Common myeloid progenitor, CD34-positive (primary cell): ENCODE measurements at regions of chr11 and their contacts with region 1.

Region 1: DNA sequence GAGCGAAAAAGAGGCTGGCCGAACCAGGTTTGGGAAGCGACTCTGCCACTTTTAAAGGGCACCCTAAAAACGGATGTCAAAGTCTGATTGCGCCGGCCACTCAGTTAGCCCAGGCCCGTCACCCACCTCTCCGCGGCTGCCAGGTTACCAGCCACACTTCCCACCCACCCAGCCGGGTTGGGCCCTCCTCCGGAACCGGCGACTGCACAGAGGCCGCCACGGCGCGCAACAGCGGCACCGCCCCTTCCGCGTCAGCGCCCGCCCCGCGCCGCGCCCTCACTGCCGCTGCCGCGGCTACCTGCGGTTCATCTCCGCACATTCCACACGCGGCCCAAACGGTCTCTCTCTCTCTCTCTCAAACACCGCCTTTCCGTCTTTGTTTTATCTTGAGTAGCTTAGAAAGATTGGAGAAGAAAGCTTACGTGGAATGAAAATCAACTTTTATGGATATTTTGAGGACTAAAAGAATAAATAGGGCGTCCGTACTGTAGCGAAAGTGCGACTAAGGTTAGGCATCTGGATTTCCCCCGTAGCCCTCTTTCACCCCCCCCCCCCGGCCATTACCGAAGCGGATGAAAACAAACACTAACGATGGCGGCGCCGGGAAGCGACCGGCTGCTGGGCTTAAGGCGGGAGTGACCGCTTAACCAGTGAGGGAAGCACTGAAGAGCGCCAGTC is at the starts of genes ATG13 and HARBI1:
- DNase-seq: peak; percentile 94 to 97 (median 96)
- H3K4me3 ChIP-seq: peak within 1 kb of the TSS; percentile 93 to 100 (median 98)
- H3K27ac ChIP-seq: peak within 1 kb of the TSS; percentile 100
- H3K4me1 ChIP-seq: peaks cover 10 to 18% (median 14%) of the 10 kb centered on the region in 4 experiments
- H3K27me3 ChIP-seq: no peaks in the 10 kb centered on the region

Region 2: GRCh38 chr11:46537537-46538295 is 79.4 kb before region 1 on chr11:
- CTCF ChIA-PET with region 1: interaction called, 13 read pairs
- POLR2A ChIA-PET with region 1: no interaction called
- DNase-seq: peak; percentile 78 to 91 (median 87)
- H3K4me3 ChIP-seq: no peak overlapping the region
- H3K27ac ChIP-seq: no peak overlapping the region
- H3K4me1 ChIP-seq: peaks cover 0 to 4% (median 0%) of the 10 kb centered on the region in 4 experiments
- H3K27me3 ChIP-seq: no peaks in the 10 kb centered on the region

Region 3: DNA sequence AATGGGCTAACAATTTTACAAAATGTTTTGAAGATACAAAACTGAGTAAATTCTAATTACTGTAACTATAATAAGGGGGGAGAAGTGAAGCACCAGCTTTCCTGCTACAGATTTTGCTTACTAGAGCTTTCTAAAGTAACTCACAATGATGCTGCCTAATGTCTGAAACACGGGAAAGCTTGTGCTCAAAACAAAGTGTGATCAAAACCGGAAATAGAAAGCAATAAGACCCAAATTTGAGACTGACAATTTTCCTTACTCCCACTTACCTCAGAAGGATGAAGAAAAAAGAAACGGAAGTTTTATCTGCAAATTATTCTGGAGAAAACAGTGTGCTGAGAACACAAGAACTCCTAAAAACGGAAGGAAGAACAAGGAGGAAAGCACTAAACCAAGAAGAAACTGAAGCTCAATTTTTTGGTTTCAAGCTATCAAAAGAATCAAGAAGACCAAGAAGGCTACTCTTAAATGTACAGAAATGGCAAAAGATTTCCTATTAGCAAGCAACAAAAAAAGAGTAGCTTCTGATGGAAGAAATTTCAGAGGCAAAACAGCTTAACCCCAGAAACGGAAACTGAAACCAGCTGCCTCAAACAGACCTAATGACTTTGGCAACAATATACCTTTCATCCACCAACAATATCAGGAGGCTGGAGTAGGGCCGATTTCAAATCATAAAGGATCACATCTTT is 56.7 kb before region 1 on chr11:
- CTCF ChIA-PET with region 1: interaction called, 12 read pairs
- POLR2A ChIA-PET with region 1: no interaction called
- DNase-seq: peak; percentile 25 to 73 (median 60)
- H3K4me3 ChIP-seq: peak overlapping the region in 6 of 7 experiments; percentile 51 to 80 (median 64)
- H3K27ac ChIP-seq: peak overlapping the region; percentile 65 to 90
- H3K4me1 ChIP-seq: peaks cover 9 to 39% (median 21%) of the 10 kb centered on the region in 4 experiments
- H3K27me3 ChIP-seq: no peaks in the 10 kb centered on the region

Region 4: GRCh38 chr11:46659908-46660307 is 42.8 kb after region 1 on chr11:
- CTCF ChIA-PET with region 1: no interaction called
- POLR2A ChIA-PET with region 1: no interaction called
- DNase-seq: peak in 2 of 3 donors; percentile 86
- H3K4me3 ChIP-seq: no peak overlapping the region
- H3K27ac ChIP-seq: peak overlapping the region in 1 of 2 experiments; percentile 60
- H3K4me1 ChIP-seq: peaks cover 0 to 20% (median 7%) of the 10 kb centered on the region in 4 experiments
- H3K27me3 ChIP-seq: no peaks in the 10 kb centered on the region